Caco-2 (cell line): ENCODE measurements at regions of chr14 and their contacts with region 1.

Region 1: GRCh38 chr14:65102441-65103149 is at the start of gene MAX:
- DNase-seq: peak; percentile 98 to 99
- H3K4me3 ChIP-seq: peak within 1 kb of the TSS; percentile 79
- H3K4me3 Mint-ChIP-seq: peak within 1 kb of the TSS; percentile 81
- H3K27ac Mint-ChIP-seq: peak within 1 kb of the TSS; percentile 82
- H3K4me1 ChIP-seq: no peaks in the 10 kb centered on the region
- H3K4me1 Mint-ChIP-seq: peaks cover 12% of the 10 kb centered on the region
- H3K27me3 ChIP-seq: no peaks in the 10 kb centered on the region
- H3K27me3 Mint-ChIP-seq: no peaks in the 10 kb centered on the region
- CTCF ChIP-seq: no peak
- total RNA-seq, gene MAX: 53.5 and 53.9 TPM in 2 replicates

Region 2: DNA sequence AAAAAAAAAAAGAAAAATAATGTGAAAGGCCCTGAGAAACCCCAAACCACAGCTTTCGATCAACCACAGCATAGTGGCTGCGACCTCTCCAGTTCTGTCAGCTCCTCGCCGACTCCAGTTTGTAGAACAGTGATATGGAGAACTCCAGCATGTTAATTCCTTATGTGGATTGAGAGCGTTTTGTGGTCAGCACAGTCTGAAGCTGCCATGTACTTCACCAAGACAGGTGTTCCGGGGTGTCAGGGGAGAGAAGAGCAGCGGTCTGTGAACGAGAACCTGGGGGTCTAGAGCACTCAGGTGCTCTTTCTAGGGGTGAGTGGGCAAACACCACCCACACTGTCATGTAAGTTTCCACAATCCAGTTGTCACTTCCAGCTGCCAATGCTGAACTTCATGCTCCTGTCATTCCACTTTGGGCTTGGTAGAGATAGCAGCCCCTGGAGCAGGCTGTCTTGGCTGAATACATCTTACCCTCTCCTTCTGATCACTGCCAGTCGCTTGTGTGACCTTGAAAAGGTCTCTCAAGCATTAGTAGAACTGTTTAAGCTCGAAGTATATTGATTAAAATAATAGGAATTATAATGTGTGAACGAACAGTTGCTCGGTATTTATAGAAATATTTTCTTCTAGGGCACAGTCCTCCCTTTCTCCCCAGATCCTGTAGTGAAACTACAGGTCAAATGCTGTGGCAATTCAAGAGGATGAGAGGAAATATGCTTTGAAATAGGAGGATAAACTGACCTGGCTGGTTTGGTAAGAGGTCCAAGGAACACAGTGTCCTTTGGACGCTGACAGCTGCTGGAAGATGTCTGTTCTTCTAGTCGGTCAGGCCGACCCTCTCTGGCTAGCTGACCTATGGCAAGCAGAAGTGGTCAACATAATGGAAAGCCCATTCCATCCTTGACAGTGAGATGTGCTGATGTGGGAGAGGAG is 15.4 kb after region 1 on chr14:
- CTCF ChIA-PET with region 1: interaction called, 5 read pairs
- POLR2A ChIA-PET with region 1: no interaction called
- intact Hi-C with region 1: loop called (anchors 2 kb)
- DNase-seq: peak; percentile 62 to 67
- H3K4me3 ChIP-seq: no peak overlapping the region
- H3K4me3 Mint-ChIP-seq: peak overlapping the region; percentile 28
- H3K27ac Mint-ChIP-seq: peak overlapping the region; percentile 3
- H3K4me1 ChIP-seq: peaks cover 10% of the 10 kb centered on the region
- H3K4me1 Mint-ChIP-seq: peaks cover 13% of the 10 kb centered on the region
- H3K27me3 ChIP-seq: no peaks in the 10 kb centered on the region
- H3K27me3 Mint-ChIP-seq: no peaks in the 10 kb centered on the region
- CTCF ChIP-seq: no peak

Region 3: DNA sequence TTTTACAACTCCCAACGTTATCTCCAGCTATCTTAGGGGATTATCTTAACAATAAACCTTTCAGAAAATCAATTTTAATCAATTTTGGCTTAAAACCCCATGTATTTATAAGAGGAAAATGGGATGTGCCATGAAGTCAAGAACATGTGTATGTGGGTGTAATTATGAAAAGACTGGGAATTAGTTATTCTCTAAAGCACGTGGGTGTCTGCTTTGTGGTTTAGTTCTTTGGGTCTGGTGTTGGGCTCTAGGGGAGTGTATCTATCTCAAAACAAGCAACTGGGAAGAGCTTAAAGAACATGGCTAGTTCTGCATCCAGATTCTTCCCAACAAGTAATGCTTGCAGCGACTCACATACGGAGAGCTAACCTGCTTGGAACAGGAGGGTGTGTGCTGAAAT is 39.8 kb after region 1 on chr14:
- CTCF ChIA-PET with region 1: no interaction called
- POLR2A ChIA-PET with region 1: no interaction called
- intact Hi-C with region 1: loop called (anchors 2 kb)
- DNase-seq: no peak
- H3K4me3 ChIP-seq: no peak overlapping the region
- H3K4me3 Mint-ChIP-seq: no peak overlapping the region
- H3K27ac Mint-ChIP-seq: no peak overlapping the region
- H3K4me1 ChIP-seq: no peaks in the 10 kb centered on the region
- H3K4me1 Mint-ChIP-seq: no peaks in the 10 kb centered on the region
- H3K27me3 ChIP-seq: no peaks in the 10 kb centered on the region
- H3K27me3 Mint-ChIP-seq: peaks cover 6% of the 10 kb centered on the region
- CTCF ChIP-seq: no peak